ENCODE measurements at regions of chr13 and their contacts with region 1.

Region 1: GRCh38 chr13:28324181-28324789 is 170.6 kb downstream of the FLT1 start:
- DNase-seq: peak; percentile 53 to 71 (median 60)
- ATAC-seq: peak; percentile 56
- H3K4me3 ChIP-seq: no peak overlapping the region
- H3K27ac ChIP-seq: no peak overlapping the region
- H3K4me1 ChIP-seq: no peaks in the 10 kb centered on the region
- H3K27me3 ChIP-seq: no peaks in the 10 kb centered on the region
- CTCF ChIP-seq: peak; percentile 60 to 79 (median 65)
- POLR2A ChIP-seq: no peak

Region 2: GRCh38 chr13:28623782-28624706 is 299.8 kb after region 1 on chr13:
- intact Hi-C with region 1: loop called (anchors 10 kb)
- DNase-seq: no peak
- ATAC-seq: no peak
- H3K4me3 ChIP-seq: no peak overlapping the region
- H3K27ac ChIP-seq: no peak overlapping the region
- H3K4me1 ChIP-seq: no peaks in the 10 kb centered on the region
- H3K27me3 ChIP-seq: no peaks in the 10 kb centered on the region
- CTCF ChIP-seq: no peak
- POLR2A ChIP-seq: no peak

Region 3: GRCh38 chr13:28792992-28793391 is 468.7 kb after region 1 on chr13:
- intact Hi-C with region 1: loop called (anchors 10 kb)
- DNase-seq: peak in 1 of 4 donors; percentile 13
- ATAC-seq: no peak
- H3K4me3 ChIP-seq: no peak overlapping the region
- H3K27ac ChIP-seq: no peak overlapping the region
- H3K4me1 ChIP-seq: peaks cover 6% of the 10 kb centered on the region
- H3K27me3 ChIP-seq: peaks cover 0 to 7% of the 10 kb centered on the region in 2 donors
- CTCF ChIP-seq: no peak
- POLR2A ChIP-seq: no peak